ENCODE measurements at regions of chr2 and their contacts with region 1.

Region 1: DNA sequence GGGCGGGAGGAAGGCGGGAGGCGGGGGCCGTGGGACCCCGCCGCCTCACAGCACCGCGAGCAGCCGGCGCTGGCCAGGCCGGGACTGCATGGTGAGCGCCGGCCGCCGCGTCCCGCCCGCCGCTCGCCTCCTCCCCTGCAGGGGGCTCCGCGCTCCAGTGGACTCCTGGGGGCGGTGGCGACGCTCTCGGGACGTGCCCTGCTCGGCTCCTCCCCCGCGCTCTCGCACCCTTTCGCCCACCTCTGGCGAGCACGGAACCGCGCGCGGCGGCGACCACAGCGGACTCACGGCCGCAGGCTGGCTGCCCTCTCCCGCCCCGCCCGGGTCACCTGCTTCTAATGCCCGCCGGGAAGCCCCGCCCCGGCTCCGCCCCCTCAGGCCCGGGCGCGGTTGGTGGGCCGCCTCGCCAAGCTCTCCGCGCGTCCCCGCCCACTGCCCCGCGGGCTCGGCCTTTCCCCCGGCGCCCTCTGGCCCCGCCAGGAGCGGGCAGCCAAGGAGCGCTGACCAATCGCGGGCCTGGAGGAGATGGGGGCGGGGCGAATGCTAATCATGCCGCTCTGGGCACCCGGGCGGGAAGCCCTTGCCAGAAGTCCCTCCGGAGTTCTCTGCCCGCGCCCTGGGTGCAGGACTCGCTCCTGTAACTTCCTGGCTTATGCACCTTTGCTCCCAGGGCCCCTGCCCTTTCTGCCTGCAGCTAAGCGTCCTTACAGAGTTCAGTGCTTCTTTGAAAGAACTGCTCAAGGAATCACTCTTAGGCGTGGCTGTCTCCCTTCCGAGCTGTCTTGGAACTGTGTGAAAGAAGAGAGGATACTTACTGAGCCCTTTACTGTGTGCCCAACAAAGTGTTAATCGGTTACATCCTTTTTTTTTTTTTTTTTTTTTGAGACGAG is at the start of gene FZD5:
- DNase-seq: peak; percentile 97 to 99 (median 98)
- H3K4me3 ChIP-seq: peak within 1 kb of the TSS; percentile 49 to 88 (median 68)
- H3K27ac ChIP-seq: peak within 1 kb of the TSS; percentile 65 to 82 (median 77)
- H3K4me1 ChIP-seq: peaks cover 17 to 37% of the 10 kb centered on the region in 2 donors
- H3K27me3 ChIP-seq: no peaks in the 10 kb centered on the region
- CTCF ChIP-seq: peak in 5 of 6 experiments; percentile 20 to 82 (median 53)
- POLR2A ChIP-seq: peak; percentile 59 to 93
- total RNA-seq, gene FZD5: 14.6 to 31.0 (median 21.1) TPM

Region 2: GRCh38 chr2:207265869-207266268 is 504.0 kb before region 1 on chr2:
- intact Hi-C with region 1: no loop called
- DNase-seq: no peak
- H3K4me3 ChIP-seq: no peak overlapping the region
- H3K27ac ChIP-seq: no peak overlapping the region
- H3K4me1 ChIP-seq: no peaks in the 10 kb centered on the region
- H3K27me3 ChIP-seq: no peaks in the 10 kb centered on the region
- CTCF ChIP-seq: no peak
- POLR2A ChIP-seq: no peak

Region 3: GRCh38 chr2:208033758-208034502 is 264.1 kb after region 1 on chr2:
- intact Hi-C with region 1: loop called (anchors 5 to 10 kb)
- DNase-seq: peak; percentile 51 to 84 (median 64)
- H3K4me3 ChIP-seq: no peak overlapping the region
- H3K27ac ChIP-seq: peak overlapping the region in 3 of 5 donors; percentile 27 to 54 (median 54)
- H3K4me1 ChIP-seq: peaks cover 0 to 6% of the 10 kb centered on the region in 2 donors
- H3K27me3 ChIP-seq: no peaks in the 10 kb centered on the region
- CTCF ChIP-seq: peak; percentile 5 to 53 (median 48)
- POLR2A ChIP-seq: no peak

Region 4: DNA sequence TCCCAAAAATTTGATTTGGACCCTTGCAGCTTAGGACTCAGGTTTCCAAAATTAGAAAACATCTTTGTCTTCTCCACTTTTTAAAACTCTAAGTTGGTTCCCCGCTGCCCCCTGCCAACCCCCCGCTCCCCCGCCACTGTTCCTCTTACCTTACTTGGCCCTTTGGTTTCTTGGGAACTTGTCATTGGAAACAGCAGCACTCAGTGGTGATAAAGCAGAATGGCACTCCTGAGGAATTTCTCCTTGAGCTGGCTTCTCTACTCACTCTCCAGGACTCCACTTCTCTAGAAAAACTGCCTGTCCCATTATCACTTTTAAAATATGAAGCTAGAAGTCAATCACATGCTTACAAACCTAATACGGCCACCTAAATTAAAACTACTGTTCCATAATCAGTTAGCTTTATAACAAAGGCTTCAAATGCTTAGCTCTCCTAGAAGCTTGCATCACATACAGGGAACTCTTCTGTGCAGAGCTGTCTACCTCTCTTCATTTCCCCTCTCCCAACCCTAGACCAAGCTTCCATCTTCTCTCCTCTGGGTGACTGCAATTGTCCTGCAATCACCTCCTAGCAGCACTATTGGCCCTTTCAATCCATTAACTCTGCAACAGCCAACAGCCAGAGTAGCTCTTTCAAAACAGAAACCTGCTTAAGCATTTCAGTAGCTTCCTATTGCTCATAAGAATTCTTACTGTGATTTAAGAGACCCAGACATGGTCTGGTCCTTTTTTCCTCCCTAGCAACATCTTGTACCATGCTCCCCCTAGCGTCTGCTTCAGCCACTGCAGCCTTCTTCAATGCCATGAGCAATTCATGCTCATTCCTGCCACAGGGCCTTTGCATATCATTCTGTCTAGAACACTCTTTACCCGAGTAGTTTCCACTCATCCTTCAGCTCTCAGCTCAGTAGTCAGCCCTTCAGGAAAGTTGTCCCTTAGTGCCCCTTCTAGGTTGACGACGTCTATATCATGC is 270.6 kb after region 1 on chr2:
- intact Hi-C with region 1: loop called (anchors 5 to 10 kb)
- DNase-seq: peak; percentile 67 to 90 (median 80)
- H3K4me3 ChIP-seq: no peak overlapping the region
- H3K27ac ChIP-seq: peak overlapping the region in 2 of 5 donors; percentile 55 to 61
- H3K4me1 ChIP-seq: peaks cover 3 to 5% of the 10 kb centered on the region in 2 donors
- H3K27me3 ChIP-seq: no peaks in the 10 kb centered on the region
- CTCF ChIP-seq: peak; percentile 53 to 86 (median 80)
- POLR2A ChIP-seq: no peak

Region 5: DNA sequence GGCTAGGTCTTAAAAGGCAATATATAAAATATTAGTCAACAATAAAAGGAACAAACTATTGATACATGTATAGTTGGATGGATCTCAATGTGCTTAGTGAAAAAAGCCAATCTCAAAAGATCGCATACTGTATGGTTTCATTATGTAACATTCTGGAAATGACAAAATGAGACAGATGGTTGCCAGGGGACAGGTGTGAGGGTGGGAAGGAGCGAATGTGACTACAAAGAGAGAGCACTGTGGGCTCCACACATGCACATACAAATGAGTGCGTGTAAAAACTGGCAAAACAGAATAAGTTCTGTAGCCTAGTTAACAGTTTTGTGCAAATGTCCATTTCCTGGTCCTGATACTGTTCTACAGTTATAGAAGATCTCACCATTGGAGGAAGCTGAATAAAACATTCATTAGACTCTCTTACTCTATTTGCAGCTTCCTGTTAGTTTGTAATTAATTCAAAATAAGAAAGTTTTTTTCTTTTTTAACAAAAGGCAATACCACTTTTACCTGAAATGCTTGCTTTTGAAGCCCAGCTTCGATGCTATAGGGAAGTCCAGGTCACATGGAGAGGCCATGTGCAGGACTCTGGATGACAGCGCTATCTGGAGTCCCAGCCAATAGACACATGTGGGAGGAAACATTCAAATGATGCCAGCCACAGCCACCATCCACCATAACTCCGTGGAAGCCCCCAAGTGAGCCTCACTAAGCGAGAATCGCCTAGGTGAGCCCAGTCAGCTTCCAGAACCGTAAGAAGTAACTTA is 441.0 kb after region 1 on chr2:
- intact Hi-C with region 1: no loop called
- DNase-seq: no peak
- H3K4me3 ChIP-seq: no peak overlapping the region
- H3K27ac ChIP-seq: no peak overlapping the region
- H3K4me1 ChIP-seq: no peaks in the 10 kb centered on the region
- H3K27me3 ChIP-seq: no peaks in the 10 kb centered on the region
- CTCF ChIP-seq: no peak
- POLR2A ChIP-seq: no peak